Dendritic cell treated with granulocyte-macrophage colony-stimulating factor and Interleukin-4, amounts not matched to agents 40 ng/mL and 50 ng/mL, for 4 days (primary cell): ENCODE measurements at regions of chr1 and their contacts with region 1.

Region 1: GRCh38 chr1:187911820-187912219 is 1083.1 kb downstream of the PLA2G4A start:
- H3K4me3 Mint-ChIP-seq: no peak overlapping the region
- H3K27ac Mint-ChIP-seq: no peak overlapping the region
- H3K4me1 Mint-ChIP-seq: no peaks in the 10 kb centered on the region
- H3K27me3 Mint-ChIP-seq: no peaks in the 10 kb centered on the region

Region 2: GRCh38 chr1:187942986-187943385 is 31.2 kb after region 1 on chr1:
- intact Hi-C with region 1: no loop called
- H3K4me3 Mint-ChIP-seq: no peak overlapping the region
- H3K27ac Mint-ChIP-seq: no peak overlapping the region
- H3K4me1 Mint-ChIP-seq: no peaks in the 10 kb centered on the region
- H3K27me3 Mint-ChIP-seq: no peaks in the 10 kb centered on the region

Region 3: GRCh38 chr1:187961895-187962294 is 50.1 kb after region 1 on chr1:
- intact Hi-C with region 1: no loop called
- H3K4me3 Mint-ChIP-seq: no peak overlapping the region
- H3K27ac Mint-ChIP-seq: no peak overlapping the region
- H3K4me1 Mint-ChIP-seq: no peaks in the 10 kb centered on the region
- H3K27me3 Mint-ChIP-seq: no peaks in the 10 kb centered on the region

Region 4: DNA sequence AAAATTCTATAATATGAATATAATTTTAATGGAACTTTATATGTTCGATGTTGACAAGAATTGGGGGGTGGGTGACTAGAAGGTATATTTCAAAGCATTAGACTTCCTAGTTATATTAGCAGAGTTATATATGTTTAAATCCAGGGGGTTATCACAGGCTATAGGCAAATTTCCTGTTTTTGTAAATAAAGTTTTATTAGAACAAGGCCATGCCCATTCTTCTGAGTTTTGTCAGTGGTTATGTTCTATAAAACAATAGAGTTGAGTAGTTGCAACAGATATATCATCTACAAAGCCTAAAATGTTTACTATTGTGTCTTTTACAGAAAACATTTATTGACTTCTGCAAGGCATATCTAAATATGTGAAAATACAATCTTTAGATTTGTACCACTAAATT is 77.2 kb after region 1 on chr1:
- intact Hi-C with region 1: loop called (anchors 2 kb)
- H3K4me3 Mint-ChIP-seq: no peak overlapping the region
- H3K27ac Mint-ChIP-seq: no peak overlapping the region
- H3K4me1 Mint-ChIP-seq: no peaks in the 10 kb centered on the region
- H3K27me3 Mint-ChIP-seq: no peaks in the 10 kb centered on the region